Activated CD4-positive, alpha-beta memory T cell treated with anti-CD3 and anti-CD28 coated beads for 36 hours (primary cell): ENCODE measurements at regions of chr15 and their contacts with region 1.

Region 1: DNA sequence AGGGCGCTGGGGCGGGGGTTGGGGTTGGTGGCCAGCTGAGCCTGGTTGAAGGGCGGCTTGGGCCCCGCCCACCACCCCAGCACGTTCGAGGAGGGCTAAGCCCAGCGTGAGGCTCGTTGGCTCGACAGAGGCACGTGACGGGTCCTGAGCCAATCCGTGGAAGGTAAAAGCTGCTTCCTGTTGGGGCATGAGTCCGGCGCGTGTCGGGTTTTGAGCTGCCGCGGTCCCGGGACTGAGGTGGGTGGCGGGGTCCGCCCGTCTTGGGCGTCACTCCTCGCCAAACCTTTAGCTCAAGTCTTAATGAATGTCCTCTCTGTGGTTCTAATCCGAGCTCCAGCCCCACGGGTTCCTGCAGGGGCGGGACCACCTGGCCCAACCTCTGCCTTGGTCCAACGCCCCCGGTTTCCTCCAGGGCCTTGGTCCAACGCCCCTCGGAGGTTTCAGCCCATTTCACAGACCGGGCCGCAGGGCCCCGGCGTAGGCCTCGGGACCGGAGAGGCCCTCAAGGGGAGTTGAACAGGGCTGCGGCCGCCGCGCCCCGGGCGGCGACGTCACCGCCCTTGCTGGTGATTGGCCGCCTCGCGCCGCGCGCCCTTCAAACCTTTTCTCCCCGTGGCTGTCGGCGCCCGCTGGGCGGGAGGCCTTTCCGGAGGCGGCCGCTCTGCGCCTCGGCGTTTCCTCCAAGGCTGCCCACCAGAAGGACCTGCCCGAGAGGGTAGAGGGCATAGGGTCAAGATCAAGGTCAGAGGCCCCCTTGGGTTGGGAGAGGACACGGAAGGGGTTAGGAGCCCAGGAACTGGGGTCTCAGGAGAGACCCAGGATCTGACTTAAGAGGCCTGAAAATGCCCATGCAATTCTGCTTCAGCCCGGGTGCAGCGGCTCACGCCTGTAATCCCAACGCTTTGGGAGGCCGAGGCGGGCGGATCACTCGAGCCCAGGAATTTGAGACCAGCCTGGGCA is at the start of gene RCCD1:
- DNase-seq: peak; percentile 96
- H3K4me3 Mint-ChIP-seq: peak within 1 kb of the TSS; percentile 87
- H3K27ac Mint-ChIP-seq: peak within 1 kb of the TSS; percentile 94
- H3K4me1 Mint-ChIP-seq: peaks cover 14% of the 10 kb centered on the region
- H3K27me3 Mint-ChIP-seq: no peaks in the 10 kb centered on the region
- total RNA-seq, gene RCCD1: 39.9 to 41.4 TPM

Region 2: GRCh38 chr15:90814191-90814821 is 140.7 kb before region 1 on chr15:
- CTCF ChIA-PET with region 1: no interaction called
- POLR2A ChIA-PET with region 1: no interaction called
- intact Hi-C with region 1: no loop called
- DNase-seq: peak; percentile 44
- H3K4me3 Mint-ChIP-seq: peak overlapping the region; percentile 28
- H3K27ac Mint-ChIP-seq: peak overlapping the region; percentile 88
- H3K4me1 Mint-ChIP-seq: peaks cover 60% of the 10 kb centered on the region
- H3K27me3 Mint-ChIP-seq: no peaks in the 10 kb centered on the region

Region 3: DNA sequence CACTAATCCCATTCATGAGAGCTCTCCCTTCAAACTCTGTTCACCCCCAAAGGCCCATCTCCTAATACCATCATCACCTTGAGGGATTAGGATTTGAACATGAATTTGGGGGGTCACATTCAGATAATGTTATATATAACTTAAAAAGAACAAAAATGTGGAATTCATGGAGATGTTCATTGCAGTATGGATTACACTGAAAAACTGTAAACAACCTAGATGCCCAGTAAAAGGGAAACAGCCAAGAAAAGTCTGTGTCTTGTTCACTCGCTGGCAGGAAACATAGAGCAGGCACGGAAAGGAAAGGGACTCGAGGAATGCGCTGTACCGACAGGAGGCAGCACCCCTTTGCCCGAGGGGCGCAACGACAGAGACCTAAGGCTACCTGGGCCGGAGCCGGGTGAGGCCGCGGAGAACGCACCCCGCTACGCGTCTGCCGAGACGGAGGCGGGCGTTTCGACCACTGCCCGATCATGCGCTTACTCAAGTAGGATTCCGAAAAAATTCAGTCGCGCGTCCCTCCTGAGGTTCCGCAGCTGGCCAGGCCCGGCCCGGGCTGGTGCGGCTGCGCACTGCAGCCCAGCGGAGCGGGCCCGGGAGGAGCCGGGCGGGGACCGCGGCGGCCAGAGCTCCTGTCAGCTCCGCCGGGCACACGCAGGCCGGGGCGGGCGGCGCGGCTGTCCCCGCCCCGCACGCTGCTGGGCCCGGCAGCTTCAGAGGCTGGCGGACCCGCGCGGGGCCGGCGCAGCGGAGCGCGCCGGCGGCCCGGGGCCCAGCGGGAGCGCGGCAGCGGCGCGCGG is 52.8 kb before region 1 on chr15:
- CTCF ChIA-PET with region 1: interaction called, 3 read pairs
- POLR2A ChIA-PET with region 1: interaction called, 17 read pairs
- intact Hi-C with region 1: loop called (anchors 2 kb)
- DNase-seq: peak; percentile 82
- H3K4me3 Mint-ChIP-seq: peak overlapping the region; percentile 83
- H3K27ac Mint-ChIP-seq: peak overlapping the region; percentile 88
- H3K4me1 Mint-ChIP-seq: peaks cover 25% of the 10 kb centered on the region
- H3K27me3 Mint-ChIP-seq: no peaks in the 10 kb centered on the region

Region 4: DNA sequence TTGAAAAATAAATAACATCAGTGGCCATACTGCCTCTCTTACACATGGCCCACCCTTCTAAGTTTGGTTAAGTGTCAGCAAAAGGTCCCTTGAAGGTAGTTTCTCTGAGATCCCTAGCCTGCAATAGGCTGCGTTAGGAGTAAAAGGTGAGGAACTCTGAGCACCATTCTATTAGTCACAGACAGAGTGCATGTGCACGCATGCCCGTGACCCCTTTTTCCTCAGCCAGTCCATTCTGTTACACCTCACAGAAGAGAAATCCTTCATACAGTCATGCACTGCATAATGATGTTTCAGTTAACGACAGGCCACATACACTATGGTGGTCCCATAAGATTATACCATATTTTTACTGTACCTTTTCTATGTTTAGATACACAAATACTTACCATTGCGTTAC is 12.2 kb after region 1 on chr15:
- CTCF ChIA-PET with region 1: interaction called, 17 read pairs
- POLR2A ChIA-PET with region 1: interaction called, 3 read pairs
- intact Hi-C with region 1: no loop called
- DNase-seq: no peak
- H3K4me3 Mint-ChIP-seq: no peak overlapping the region
- H3K27ac Mint-ChIP-seq: no peak overlapping the region
- H3K4me1 Mint-ChIP-seq: no peaks in the 10 kb centered on the region
- H3K27me3 Mint-ChIP-seq: no peaks in the 10 kb centered on the region

Region 5: DNA sequence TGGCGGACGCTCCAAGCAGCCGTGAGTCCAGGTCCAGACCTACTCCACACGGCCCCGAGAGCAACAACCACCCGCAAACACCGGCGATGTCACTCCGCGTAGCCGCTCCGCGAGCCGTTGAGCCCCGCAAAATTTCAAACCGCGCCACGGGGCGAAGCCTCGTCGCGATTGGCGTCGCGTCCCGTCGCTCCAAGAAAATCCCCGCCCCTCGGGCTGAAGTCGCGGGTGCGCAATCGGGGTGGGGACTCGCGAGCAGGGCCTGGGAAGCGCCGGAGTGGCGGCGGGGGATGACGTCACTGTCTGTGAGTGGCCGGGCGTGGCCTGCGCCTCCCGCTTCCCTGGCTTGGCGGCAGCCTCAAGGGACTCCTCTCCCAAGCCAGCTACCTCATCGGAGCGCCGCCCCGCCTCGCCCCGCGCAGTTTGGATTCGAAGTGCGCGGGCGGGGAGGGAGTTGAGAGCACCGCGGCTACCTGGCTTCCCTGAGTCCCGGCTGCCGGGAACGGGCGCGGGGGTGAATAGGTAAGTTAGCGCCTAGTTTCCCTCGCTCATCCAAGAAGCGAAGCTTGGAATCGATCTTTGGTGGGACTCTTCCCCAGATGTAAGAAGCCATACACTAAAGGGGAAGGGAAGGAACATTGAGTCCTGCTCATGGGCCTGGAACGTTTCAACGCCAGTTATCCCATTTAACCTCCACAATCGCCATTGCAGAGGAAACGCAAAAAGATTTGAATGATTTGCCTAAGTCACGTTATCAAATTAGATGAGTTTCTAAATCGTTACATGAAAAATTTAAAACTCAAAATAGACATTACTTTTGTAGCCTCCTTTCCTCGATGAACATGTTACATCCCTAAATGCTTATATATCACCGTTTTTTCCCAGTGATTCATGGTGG is 39.7 kb after region 1 on chr15 and contains the start of gene PRC1:
- CTCF ChIA-PET with region 1: interaction called, 3 read pairs
- POLR2A ChIA-PET with region 1: interaction called, 5 read pairs
- intact Hi-C with region 1: loop called (anchors 2 kb)
- DNase-seq: peak; percentile 99
- H3K4me3 Mint-ChIP-seq: peak within 1 kb of the TSS; percentile 100
- H3K27ac Mint-ChIP-seq: peak within 1 kb of the TSS; percentile 98
- H3K4me1 Mint-ChIP-seq: peaks cover 25% of the 10 kb centered on the region
- H3K27me3 Mint-ChIP-seq: peaks cover 2% of the 10 kb centered on the region
- total RNA-seq, gene PRC1: 151 to 158 TPM

Region 6: GRCh38 chr15:91032919-91033803 is 78.2 kb after region 1 on chr15:
- CTCF ChIA-PET with region 1: interaction called, 31 read pairs
- POLR2A ChIA-PET with region 1: no interaction called
- intact Hi-C with region 1: loop called (anchors 1 kb)
- DNase-seq: peak; percentile 77
- H3K4me3 Mint-ChIP-seq: no peak overlapping the region
- H3K27ac Mint-ChIP-seq: no peak overlapping the region
- H3K4me1 Mint-ChIP-seq: peaks cover 4% of the 10 kb centered on the region
- H3K27me3 Mint-ChIP-seq: no peaks in the 10 kb centered on the region

Region 7: DNA sequence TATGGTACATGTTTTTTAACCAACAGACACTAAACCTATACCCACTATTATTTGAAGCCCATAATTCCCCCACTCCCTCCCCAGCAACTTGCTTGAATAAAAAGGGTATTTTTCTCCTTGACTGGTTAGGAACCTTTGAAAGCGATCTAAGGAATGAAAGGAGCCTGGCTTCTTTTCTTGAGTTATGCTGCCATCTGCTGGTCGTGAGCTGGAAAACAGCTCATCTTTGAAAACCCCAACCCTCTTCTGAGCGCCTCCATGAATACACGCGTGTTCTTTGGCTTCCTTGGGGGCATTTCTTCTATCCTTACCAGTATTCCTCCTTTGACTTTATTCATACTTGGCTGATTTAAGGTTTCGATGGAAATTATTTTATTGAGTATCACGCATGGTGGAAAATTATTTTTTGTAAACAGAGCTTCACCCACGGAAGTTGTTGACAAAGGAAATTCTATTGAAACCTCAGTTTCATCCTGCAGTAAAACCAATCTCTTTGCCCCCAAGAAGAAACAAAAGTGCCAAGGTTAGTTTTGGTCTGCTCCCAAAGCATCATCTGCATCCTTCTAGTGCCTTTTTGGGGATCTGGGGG is 316.7 kb after region 1 on chr15:
- CTCF ChIA-PET with region 1: interaction called, 26 read pairs
- POLR2A ChIA-PET with region 1: no interaction called
- intact Hi-C with region 1: loop called (anchors 2 kb)
- DNase-seq: peak; percentile 72
- H3K4me3 Mint-ChIP-seq: peak overlapping the region; percentile 16
- H3K27ac Mint-ChIP-seq: no peak overlapping the region
- H3K4me1 Mint-ChIP-seq: peaks cover 8% of the 10 kb centered on the region
- H3K27me3 Mint-ChIP-seq: peaks cover 17% of the 10 kb centered on the region